Endothelial cell of umbilical vein (primary cell): ENCODE measurements at regions of chr4 and their contacts with region 1.

Region 1: DNA sequence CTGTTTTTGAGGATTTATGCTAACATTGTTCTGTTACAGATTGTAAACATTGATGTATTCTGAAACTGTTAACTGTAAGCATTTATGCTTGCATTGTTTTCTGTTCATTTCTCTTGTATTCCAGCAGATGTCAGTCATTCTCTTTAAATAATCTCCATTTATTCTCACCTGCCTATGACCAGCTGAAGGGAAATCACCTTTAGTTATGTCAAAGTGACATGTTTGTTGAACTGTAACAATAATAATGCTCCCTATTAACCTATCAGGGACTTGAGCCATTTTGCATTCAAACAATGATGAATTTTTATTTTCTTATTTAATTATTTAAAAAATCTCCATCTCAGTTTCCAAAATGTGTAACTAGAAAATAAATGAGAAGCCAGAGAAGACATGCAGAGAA is 58.0 kb downstream of the SPCS3 start:
- DNase-seq: peak; percentile 39
- H3K4me3 ChIP-seq: no peak overlapping the region
- H3K27ac ChIP-seq: no peak overlapping the region
- H3K4me1 ChIP-seq: peaks cover under 1% of the 10 kb centered on the region
- H3K27me3 ChIP-seq: peaks cover 0 to 5% of the 10 kb centered on the region in 2 experiments
- CTCF ChIP-seq: peak in 1 of 2 donors; percentile 14
- POLR2A ChIP-seq: no peak

Region 2: DNA sequence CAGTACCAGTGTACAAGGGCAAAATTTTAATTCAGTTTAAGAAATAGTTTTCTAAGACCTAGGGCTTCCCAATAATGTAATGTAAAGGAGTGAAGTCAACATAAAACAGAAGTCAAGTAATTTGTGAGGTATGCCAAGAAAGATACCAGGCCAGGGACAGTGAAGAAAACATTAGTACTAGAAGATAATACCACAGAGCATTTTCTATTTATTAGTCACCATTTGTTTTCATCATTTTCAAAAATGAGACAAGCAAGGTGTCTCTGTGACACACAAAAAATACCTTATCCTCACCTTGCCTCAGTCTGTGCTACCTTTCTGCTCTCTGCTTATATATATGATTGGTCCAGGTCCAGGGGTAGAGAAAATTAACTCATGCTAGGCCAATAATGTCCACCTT is 368.1 kb after region 1 on chr4:
- CTCF ChIA-PET with region 1: no interaction called
- POLR2A ChIA-PET with region 1: no interaction called
- dilution Hi-C with region 1: no loop called
- intact Hi-C with region 1: no loop called
- DNase-seq: no peak
- H3K4me3 ChIP-seq: no peak overlapping the region
- H3K27ac ChIP-seq: no peak overlapping the region
- H3K4me1 ChIP-seq: peaks cover 9% of the 10 kb centered on the region
- H3K27me3 ChIP-seq: no peaks in the 10 kb centered on the region
- CTCF ChIP-seq: no peak
- POLR2A ChIP-seq: no peak

Region 3: DNA sequence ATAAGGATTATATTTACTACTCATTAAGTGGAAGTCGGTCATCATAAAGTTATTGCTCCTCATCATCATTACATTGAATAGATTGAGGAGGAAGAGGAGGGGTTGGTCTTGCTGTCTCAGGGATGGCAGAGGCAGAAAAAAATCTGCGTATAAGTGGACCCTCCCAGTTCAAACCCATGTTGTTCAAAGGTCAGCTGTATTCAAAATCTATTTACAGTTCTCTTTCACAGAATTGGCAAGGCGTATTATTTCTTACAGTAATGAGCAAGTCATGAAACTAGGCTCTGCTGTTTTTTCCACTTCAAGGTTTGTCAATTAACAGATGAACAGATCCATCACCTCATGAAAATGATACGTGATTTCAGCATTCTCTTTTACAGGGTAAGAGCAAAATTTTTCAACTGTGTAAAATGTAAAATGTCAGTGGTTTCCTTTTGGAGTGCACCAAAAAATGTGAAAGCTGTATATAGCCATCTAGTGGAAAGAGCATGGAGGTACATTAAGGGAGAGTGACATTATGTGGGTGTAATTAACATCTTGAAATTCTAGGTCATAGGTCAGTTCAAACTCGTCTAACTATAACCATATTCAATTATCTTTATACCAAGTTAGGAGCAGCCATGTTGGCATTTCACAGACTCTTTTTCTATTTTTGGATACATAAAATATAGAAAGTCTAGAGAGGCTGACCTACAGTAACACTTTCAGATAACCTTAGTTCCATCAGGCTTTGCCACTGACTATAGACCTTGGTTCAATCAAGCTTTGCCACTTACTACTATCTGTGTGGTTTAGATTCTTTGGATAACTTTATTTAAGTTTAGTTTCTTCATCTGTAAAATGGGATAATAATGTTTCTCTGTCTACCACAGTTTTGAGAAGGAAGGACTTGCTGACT is 961.9 kb after region 1 on chr4:
- CTCF ChIA-PET with region 1: interaction called, 13 read pairs
- POLR2A ChIA-PET with region 1: no interaction called
- dilution Hi-C with region 1: no loop called
- intact Hi-C with region 1: loop called (anchors 1 kb)
- DNase-seq: peak; percentile 57
- H3K4me3 ChIP-seq: no peak overlapping the region
- H3K27ac ChIP-seq: no peak overlapping the region
- H3K4me1 ChIP-seq: no peaks in the 10 kb centered on the region
- H3K27me3 ChIP-seq: no peaks in the 10 kb centered on the region
- CTCF ChIP-seq: peak; percentile 38 to 51
- POLR2A ChIP-seq: no peak

Region 4: GRCh38 chr4:177546745-177547144 is 1169.0 kb after region 1 on chr4:
- CTCF ChIA-PET with region 1: no interaction called
- POLR2A ChIA-PET with region 1: no interaction called
- dilution Hi-C with region 1: no loop called
- intact Hi-C with region 1: loop called (anchors 5 kb)
- DNase-seq: no peak
- H3K4me3 ChIP-seq: no peak overlapping the region
- H3K27ac ChIP-seq: no peak overlapping the region
- H3K4me1 ChIP-seq: no peaks in the 10 kb centered on the region
- H3K27me3 ChIP-seq: no peaks in the 10 kb centered on the region
- CTCF ChIP-seq: no peak
- POLR2A ChIP-seq: no peak